Motor neuron (in vitro differentiated cells): ENCODE measurements at regions of chr7 and their contacts with region 1.

Region 1: GRCh38 chr7:23247603-23248335 is 1.2 kb downstream of the GPNMB start:
- ATAC-seq: peak in 3 of 8 experiments; percentile 22 to 29 (median 27)
- H3K4me3 ChIP-seq: peak overlapping the region in 2 of 5 donors; percentile 16 to 22
- H3K27ac ChIP-seq: no peak overlapping the region
- H3K4me1 ChIP-seq: no peaks in the 10 kb centered on the region

Region 2: GRCh38 chr7:22193450-22193983 is 1054.3 kb before region 1 on chr7:
- in situ Hi-C with region 1: no loop called
- ATAC-seq: peak; percentile 71 to 98 (median 86)
- H3K4me3 ChIP-seq: peak overlapping the region; percentile 38 to 57 (median 51)
- H3K27ac ChIP-seq: peak overlapping the region; percentile 74 to 89
- H3K4me1 ChIP-seq: peaks cover 31 to 55% of the 10 kb centered on the region in 2 donors

Region 3: GRCh38 chr7:22765609-22766008 is 482.2 kb before region 1 on chr7:
- in situ Hi-C with region 1: no loop called
- ATAC-seq: no peak
- H3K4me3 ChIP-seq: no peak overlapping the region
- H3K27ac ChIP-seq: no peak overlapping the region
- H3K4me1 ChIP-seq: no peaks in the 10 kb centered on the region

Region 4: DNA sequence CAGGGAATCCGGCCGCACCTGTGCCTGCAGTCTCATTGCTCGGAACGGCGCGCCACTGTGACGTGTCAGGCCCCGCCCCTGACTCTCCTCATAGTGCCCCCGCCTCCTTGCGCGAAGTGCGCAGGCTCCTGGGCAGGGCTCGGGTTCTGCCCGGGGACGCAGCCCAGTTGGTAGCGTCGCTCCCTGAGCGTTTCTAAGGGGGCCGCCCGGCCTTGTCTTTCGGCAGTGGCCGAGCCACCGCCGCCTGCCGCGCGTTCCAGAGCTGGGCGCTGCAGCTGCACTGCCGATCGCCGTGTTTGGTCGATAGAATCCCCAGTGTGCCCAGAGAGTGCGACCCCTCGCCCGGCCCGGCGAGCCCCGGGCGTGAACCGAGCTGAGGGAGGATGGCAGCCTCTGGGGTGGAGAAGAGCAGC is 142.1 kb before region 1 on chr7 and contains the start of gene KLHL7:
- in situ Hi-C with region 1: loop called in 1 of 9 experiments (anchors 10 kb)
- ATAC-seq: peak; percentile 91 to 97 (median 96)
- H3K4me3 ChIP-seq: peak within 1 kb of the TSS; percentile 78 to 99 (median 86)
- H3K27ac ChIP-seq: peak within 1 kb of the TSS; percentile 84 to 88
- H3K4me1 ChIP-seq: peaks cover 17% of the 10 kb centered on the region in 2 donors
- total RNA-seq, gene KLHL7: 26.7 to 82.5 (median 56.7) TPM

Region 5: GRCh38 chr7:23191021-23191420 is 56.7 kb before region 1 on chr7:
- in situ Hi-C with region 1: loop called in 1 of 9 experiments (anchors 10 kb)
- ATAC-seq: peak in 2 of 8 experiments; percentile 27 to 55
- H3K4me3 ChIP-seq: no peak overlapping the region
- H3K27ac ChIP-seq: no peak overlapping the region
- H3K4me1 ChIP-seq: no peaks in the 10 kb centered on the region